Activated CD4-positive, alpha-beta memory T cell treated with anti-CD3 and anti-CD28 coated beads for 36 hours (primary cell): ENCODE measurements at regions of chr10 and their contacts with region 1.

Region 1: GRCh38 chr10:110803830-110804338 is 67.8 kb upstream of the PDCD4 start:
- DNase-seq: peak; percentile 49
- H3K4me3 Mint-ChIP-seq: no peak overlapping the region
- H3K27ac Mint-ChIP-seq: peak overlapping the region; percentile 15
- H3K4me1 Mint-ChIP-seq: peaks cover 36% of the 10 kb centered on the region
- H3K27me3 Mint-ChIP-seq: no peaks in the 10 kb centered on the region

Region 2: DNA sequence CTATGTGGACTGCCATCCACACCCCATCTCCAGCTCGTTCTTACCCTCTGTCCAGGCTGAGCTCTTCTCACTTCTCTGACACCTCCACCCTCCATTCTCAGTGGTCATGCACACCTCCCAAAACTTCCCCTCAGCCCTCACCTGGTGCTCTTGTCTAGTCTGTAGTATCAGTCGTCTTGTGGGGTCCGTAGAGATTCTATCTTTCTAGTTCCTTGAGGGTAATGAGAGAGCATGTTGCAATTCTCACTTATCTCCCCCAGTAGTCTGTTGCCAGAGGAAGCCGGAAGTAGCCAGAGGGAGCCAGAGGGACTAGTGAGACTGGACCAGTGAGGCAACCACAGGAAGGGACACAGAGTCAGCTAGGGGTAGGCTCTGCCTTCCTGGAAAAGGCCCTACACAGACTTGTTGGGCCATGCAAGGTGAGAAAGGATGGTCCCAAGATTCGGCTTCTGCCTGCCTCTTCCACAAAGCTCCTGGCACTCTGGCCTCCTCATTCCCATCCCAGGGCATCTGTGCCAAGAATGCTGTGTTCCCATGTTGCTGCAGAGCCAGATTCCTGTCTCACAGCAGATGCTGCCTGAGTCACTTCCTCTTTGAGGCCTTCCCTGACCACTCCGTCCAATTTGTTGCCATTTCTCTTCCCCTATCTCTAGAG is 356.8 kb before region 1 on chr10:
- CTCF ChIA-PET with region 1: no interaction called
- POLR2A ChIA-PET with region 1: no interaction called
- intact Hi-C with region 1: no loop called
- DNase-seq: no peak
- H3K4me3 Mint-ChIP-seq: no peak overlapping the region
- H3K27ac Mint-ChIP-seq: no peak overlapping the region
- H3K4me1 Mint-ChIP-seq: peaks cover 3% of the 10 kb centered on the region
- H3K27me3 Mint-ChIP-seq: no peaks in the 10 kb centered on the region

Region 3: GRCh38 chr10:110774069-110775019 is 29.5 kb before region 1 on chr10:
- CTCF ChIA-PET with region 1: interaction called, 4 read pairs
- POLR2A ChIA-PET with region 1: interaction called, 6 read pairs
- intact Hi-C with region 1: loop called (anchors 2 kb)
- DNase-seq: peak; percentile 69
- H3K4me3 Mint-ChIP-seq: peak overlapping the region; percentile 42
- H3K27ac Mint-ChIP-seq: peak overlapping the region; percentile 79
- H3K4me1 Mint-ChIP-seq: peaks cover 40% of the 10 kb centered on the region
- H3K27me3 Mint-ChIP-seq: no peaks in the 10 kb centered on the region

Region 4: DNA sequence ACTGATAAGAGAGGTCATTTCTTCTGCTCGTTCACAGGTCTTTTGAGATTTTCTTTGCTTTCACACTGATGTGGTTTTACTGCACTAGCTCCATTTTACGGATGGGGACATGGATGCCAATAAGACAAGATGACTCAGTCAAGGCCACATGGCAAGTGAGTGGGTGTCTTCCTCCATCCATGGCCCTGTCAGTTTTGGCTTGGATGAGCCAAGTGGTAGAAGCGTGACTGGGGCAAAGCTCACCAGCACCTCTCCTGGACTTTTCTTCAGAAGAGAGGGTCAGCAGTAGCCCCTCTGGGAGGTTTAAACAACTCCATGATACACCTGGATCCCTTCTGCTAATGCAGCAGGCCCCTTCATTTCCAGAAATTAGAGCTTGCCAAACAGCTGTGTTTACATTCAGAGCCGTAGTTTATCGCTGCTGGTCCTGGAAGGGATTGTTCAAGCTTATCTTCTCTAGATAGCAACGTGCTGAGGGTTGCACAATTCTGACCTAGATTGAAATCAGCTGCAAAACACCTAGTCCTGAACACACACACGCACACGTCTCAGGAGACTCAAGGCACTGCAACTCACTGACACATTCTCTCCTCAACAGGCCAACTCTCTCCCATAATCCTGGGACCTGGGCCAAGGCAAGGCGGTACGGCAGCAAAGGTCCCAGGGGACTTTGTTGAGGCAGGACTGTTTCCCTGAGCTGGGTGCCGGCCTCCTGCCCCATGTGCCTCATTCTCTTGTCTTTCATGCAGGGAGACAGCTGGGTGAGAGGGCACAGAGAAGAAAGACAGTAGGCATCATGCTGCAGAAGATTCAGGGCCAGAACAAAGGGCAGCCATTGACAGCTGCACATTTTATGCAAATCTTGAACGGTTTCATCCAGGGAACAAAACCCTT is 53.6 kb after region 1 on chr10:
- CTCF ChIA-PET with region 1: interaction called, 13 read pairs
- POLR2A ChIA-PET with region 1: no interaction called
- intact Hi-C with region 1: no loop called
- DNase-seq: peak; percentile 66
- H3K4me3 Mint-ChIP-seq: peak overlapping the region; percentile 25
- H3K27ac Mint-ChIP-seq: peak overlapping the region; percentile 72
- H3K4me1 Mint-ChIP-seq: peaks cover 82% of the 10 kb centered on the region
- H3K27me3 Mint-ChIP-seq: no peaks in the 10 kb centered on the region

Region 5: GRCh38 chr10:110893559-110894179 is 89.8 kb after region 1 on chr10:
- CTCF ChIA-PET with region 1: interaction called, 25 read pairs
- POLR2A ChIA-PET with region 1: no interaction called
- intact Hi-C with region 1: loop called (anchors 1 kb)
- DNase-seq: no peak
- H3K4me3 Mint-ChIP-seq: no peak overlapping the region
- H3K27ac Mint-ChIP-seq: peak overlapping the region; percentile 4
- H3K4me1 Mint-ChIP-seq: peaks cover 47% of the 10 kb centered on the region
- H3K27me3 Mint-ChIP-seq: no peaks in the 10 kb centered on the region